HEK293 (cell line): ENCODE measurements at regions of chr11 and their contacts with region 1.

Region 1: GRCh38 chr11:125123947-125124617 is 12.7 kb upstream of the TMEM218 start:
- H3K4me3 ChIP-seq: no peak overlapping the region
- H3K27ac ChIP-seq: no peak overlapping the region
- H3K4me1 ChIP-seq: no peaks in the 10 kb centered on the region
- CTCF ChIP-seq: no peak

Region 2: DNA sequence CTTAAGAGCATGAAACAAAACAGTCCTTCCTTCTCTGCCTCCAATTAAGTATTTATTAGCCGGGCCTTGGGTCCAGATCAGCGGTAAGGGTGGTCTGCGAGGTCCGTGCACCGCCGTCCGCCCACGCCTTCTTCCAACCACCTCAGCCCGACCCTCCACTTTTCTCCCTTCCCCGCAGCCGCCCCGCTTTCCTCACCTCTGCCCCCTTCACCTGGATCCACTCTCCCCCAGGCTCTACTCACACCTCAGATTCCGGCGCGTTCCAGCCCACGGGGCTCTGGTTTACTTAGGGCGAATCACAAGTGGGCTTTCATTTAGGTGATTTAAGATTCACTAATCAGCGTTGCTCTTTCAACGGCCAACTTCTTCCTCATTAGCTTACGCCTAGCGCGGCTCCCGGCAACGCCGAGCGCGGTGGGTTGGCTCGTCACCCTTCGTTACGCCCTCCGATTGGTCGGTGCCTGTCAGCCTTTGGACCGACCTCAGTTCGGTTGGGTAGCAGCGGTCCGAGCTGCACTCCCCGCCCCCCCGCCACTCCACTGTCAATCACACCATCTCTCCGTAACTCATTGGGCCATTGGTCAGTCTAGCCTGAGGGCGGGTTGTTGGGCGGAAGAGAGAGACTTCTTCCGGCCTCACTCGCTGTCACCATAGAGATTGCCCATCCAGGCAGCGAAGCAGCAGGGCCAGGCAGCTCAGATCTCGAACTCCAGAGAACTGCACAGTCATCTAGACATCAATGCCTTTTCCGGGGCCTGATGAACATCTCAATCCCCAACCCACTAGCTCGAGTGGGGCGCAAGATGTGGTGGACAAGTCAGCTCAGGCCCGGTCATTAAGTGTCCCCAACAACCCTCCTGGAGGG is 12.5 kb before region 1 on chr11 and contains the start of gene TMEM218:
- CTCF ChIA-PET with region 1: interaction called, 13 read pairs
- POLR2A ChIA-PET with region 1: interaction called, 6 read pairs
- H3K4me3 ChIP-seq: peak within 1 kb of the TSS; percentile 81
- H3K27ac ChIP-seq: no peak within 1 kb of the TSS; the same call in 1 of the 2 replicates
- H3K4me1 ChIP-seq: no peaks in the 10 kb centered on the region
- CTCF ChIP-seq: no peak

Region 3: DNA sequence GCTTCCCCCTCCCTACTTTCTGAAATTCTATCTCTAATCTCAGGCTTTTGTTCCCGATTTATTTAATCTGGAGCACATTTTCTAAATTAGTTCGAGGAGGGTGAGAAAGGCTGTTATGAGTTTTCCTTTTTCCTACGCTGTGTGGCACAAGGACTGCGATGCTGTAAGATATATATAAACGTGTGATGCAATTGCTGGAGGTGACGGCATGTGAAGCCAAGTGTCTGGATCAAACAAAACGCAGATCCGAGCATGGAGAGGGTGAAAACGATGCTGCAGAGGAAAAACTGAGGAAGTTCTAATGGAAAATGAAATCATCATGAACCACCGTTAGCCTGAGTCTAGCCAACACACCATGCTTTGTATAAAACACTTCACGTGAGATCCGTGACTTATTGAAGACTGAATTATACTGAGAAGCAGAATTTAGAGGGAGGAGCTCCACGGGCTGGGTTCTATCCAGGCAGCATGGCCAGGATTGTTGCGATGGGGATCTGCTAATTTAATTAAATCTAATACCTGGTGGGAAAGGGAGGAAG is 44.9 kb after region 1 on chr11:
- CTCF ChIA-PET with region 1: no interaction called
- POLR2A ChIA-PET with region 1: no interaction called
- H3K4me3 ChIP-seq: no peak overlapping the region
- H3K27ac ChIP-seq: peak overlapping the region; percentile 87; the same call in 1 of the 2 replicates
- H3K4me1 ChIP-seq: peaks cover 20% of the 10 kb centered on the region
- CTCF ChIP-seq: no peak